Activated T-helper 2 cell treated with anti-CD3 and anti-CD28 coated beads, Interferon-gamma antibody, Interleukin-2, Interleukin-4, amounts not matched to agents 10 μg/mL and 5 μg/mL and 100 μg/mL, durations not matched to agents 14 hours and 24 hours and 36 hours (primary cell): ENCODE measurements at regions of chr2 and their contacts with region 1.

Region 1: DNA sequence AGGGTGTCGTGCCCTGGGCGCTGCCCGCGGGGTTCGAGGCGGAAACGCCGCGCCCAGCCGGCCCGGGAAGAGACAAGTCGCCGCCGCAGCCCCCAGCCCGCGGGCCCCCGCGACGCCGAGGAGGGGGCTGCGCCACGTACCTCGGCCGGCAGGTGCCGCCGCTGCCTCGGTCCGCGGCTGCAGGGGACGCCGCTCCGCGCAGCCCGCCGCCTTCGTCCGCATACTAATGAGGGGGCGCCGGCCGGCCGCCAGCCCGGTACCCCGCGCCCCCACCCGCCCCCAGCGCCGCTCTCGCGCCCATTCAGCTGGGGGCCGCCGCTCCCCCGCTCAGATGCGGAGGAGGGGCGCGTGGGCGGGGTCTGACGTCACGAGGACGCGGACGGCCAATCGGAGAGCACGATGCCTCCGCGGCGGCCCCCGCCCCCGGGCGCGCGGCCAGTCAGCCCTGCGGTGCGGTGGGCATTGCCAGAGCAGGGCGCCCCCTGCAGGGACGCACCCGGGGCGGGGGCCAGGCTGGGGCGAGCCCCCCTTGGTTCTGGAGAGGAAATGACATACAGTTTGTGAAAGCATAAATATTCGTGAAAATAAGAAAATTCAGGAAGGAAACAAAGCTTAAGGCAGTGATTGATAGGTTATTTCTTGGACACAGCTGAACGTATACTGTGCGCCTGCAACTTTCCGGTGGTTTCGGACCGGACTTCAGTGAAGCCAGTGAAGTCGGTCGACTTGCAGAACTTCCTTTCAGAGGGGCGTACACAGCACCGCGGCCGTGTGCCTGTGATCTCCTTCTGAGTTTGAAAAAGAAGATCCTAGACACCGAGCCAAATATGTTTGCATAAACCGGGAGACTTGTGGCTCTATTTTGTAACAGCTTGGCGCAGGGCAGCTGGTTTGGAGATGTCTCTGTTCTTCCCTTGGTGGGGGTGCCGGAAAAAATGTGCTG is at the start of gene ST3GAL5:
- DNase-seq: peak; percentile 89
- H3K4me3 Mint-ChIP-seq: peak within 1 kb of the TSS; percentile 82
- H3K27ac Mint-ChIP-seq: peak within 1 kb of the TSS; percentile 71
- H3K4me1 Mint-ChIP-seq: peaks cover 54% of the 10 kb centered on the region
- H3K27me3 Mint-ChIP-seq: peaks cover 4% of the 10 kb centered on the region
- total RNA-seq, gene ST3GAL5: 13.8 and 15.7 TPM in 2 replicates

Region 2: DNA sequence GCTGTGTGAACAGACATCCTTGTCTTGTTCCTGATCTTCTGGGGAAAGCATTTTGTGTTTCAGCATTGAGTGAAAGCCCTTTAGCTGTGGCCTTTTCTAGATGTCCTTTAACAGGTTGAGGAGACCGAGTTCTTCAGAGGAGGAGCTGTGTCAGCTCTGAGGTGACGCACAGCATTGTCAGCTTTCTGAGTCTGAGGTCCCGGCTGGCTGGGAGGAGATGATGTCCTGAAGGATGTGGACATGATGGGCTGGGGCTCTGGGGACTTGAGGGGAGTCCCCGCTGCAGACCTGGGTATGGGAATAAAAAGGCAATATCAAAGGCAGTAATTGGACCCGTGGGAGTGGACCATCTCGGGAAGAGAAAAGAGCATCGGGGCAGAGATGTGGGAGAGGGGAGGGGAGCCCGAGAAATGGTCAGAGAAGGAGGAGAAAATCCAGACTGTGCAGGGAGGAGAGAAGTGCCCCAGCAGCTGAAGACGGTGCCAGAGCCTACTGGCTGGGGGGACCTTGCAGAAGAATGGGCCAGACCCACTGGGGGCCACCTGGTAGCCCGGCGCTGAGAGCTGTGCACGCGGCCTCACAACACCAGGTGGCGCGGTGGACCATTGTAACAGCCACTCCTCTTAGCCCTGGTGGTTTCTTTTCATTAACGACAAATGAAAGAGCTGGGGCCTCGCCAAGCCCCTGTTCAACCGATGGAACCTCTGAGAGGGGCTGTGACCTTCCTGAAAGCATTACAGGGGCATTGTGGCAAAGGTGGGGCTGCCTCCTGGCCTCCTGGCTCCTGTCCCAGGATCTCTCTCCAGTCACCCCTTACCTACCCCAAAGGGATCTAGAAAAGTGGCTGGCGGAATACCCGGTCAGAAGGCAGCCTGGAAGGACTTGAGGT is 61.7 kb before region 1 on chr2:
- intact Hi-C with region 1: loop called (anchors 2 kb)
- DNase-seq: peak; percentile 75
- H3K4me3 Mint-ChIP-seq: no peak overlapping the region
- H3K27ac Mint-ChIP-seq: no peak overlapping the region
- H3K4me1 Mint-ChIP-seq: peaks cover 32% of the 10 kb centered on the region
- H3K27me3 Mint-ChIP-seq: peaks cover 29% of the 10 kb centered on the region

Region 3: DNA sequence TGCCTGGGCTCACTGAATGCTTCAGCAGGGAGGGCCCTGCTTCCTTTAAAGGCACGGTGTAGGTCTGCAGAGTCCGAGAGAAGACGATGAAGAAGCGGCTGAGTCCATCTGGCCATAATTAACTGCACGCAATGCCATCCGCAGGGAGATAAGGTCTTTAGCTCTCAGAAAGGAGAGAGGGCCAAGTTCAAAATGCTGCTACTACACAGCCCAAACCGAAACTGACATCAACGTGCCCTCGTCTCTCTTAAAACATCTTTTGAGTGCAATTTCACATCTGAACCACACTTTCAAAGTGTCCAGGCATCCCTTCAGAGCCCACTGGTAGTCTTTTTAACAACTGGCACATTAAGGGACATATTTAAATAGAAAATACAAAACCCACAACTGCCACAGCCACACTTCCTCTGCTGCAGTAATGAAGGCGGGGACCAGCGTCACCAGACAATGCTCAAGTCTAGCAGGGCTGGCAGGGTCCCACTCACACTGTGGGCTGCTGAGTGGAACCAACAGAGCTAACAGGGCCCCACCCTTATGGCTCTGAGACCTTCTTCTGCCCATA is 35.9 kb before region 1 on chr2:
- intact Hi-C with region 1: loop called (anchors 2 kb)
- DNase-seq: peak; percentile 54
- H3K4me3 Mint-ChIP-seq: peak overlapping the region; percentile 75
- H3K27ac Mint-ChIP-seq: peak overlapping the region; percentile 99
- H3K4me1 Mint-ChIP-seq: peaks cover 62% of the 10 kb centered on the region
- H3K27me3 Mint-ChIP-seq: no peaks in the 10 kb centered on the region

Region 4: DNA sequence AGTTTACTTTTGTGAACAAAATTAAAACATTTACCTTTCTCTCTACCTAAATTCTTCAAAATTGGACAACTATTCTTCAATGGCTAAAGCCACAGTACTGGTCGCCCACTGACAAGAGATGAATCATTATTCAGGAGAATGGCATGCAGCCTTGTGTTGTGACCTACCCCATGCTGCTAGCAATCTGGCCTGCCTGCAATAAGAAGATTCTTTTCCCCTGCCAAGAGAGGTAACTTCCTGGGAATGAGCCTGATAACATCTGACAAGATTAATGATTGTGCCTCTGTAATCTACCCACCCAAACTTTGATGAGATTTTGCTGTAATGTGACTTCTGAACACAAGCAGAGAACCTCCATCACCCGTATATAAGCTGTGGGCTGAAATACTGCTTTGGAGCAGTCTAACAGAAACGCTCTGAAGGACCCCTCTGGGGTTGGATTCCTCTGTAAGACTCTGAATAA is 46.8 kb after region 1 on chr2:
- intact Hi-C with region 1: loop called (anchors 5 kb)
- DNase-seq: no peak
- H3K4me3 Mint-ChIP-seq: no peak overlapping the region
- H3K27ac Mint-ChIP-seq: no peak overlapping the region
- H3K4me1 Mint-ChIP-seq: peaks cover 21% of the 10 kb centered on the region
- H3K27me3 Mint-ChIP-seq: peaks cover 9% of the 10 kb centered on the region

Region 5: DNA sequence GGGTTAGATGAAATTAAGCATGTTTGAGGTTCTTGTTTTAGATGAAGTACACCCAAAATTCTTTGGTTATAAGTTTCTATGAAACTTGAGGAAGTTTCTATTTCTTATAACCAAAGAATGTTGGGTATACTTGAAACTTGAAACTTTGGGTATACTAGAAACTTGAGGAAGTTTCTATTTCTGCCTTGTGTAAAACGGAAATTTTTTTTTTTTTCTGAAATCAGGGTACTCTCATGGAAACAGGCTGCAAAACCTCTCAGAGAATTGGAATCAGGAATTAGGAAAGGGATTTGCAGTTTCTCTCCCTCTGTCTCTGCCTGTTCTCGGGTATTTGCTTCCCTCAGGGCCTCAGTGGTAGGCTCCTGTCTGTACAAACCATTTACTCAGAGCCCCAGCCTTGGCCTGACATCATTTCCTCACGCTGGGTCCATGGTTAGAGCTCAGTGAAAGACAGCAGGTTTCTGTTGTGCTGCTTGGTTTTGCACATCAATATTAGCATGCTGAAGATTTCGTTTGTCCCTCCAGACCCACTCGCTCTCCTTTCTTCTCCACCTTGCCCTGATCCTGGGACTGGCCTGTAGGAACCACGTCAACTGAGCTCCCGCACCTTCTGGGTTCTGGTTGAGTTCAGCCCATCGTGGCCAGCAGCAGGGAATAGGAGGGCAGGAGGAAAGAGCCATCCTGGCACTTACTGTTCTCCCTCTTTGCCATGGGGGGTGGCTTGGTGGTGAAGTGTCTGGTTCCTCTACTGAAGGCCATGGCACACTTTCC is 110.3 kb after region 1 on chr2:
- intact Hi-C with region 1: loop called (anchors 2 kb)
- DNase-seq: peak; percentile 58
- H3K4me3 Mint-ChIP-seq: peak overlapping the region; percentile 20
- H3K27ac Mint-ChIP-seq: peak overlapping the region; percentile 77
- H3K4me1 Mint-ChIP-seq: peaks cover 68% of the 10 kb centered on the region
- H3K27me3 Mint-ChIP-seq: no peaks in the 10 kb centered on the region

Region 6: DNA sequence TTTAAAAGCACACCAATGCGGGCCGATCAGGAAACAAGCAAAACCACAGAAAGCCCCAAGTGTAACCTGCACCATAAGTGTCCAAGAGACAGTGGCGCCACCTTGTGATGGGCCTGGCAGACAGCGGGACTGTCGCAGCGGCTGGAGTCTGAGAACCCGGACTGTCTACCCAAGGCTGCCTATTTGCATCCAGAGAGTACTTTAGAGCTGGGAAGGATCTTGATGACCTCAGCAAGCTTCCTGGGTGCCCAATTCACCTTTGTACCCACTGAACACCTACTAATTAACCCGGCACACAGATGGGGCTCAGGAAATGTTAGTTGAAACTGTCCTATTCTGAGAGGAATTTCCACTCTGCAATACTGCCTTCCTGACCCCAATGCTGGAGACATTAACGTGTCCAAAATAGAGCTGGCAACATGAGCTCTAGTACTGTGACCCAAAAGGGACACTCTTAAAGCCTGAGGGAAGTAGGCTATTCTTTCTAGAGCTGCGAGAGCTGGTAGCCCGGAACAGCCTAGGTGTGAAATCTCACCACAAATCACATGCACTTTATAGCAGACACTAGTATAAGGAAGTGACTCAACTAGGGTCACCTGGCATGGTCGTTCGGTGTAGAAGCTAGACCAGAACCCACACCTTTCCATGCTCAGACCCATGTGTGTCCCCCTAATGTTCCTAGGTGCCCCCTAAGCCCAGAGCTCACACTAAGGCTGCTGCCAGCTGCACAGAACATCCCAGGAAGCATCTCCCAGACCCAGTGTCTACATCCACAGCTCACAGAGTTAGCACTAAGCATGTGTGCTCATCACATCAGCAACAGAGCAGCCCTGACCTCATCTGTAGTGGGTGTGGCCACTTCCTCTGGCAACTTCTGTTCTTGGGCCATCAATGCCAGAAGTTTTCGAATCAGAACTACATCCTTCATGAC is 191.3 kb after region 1 on chr2:
- intact Hi-C with region 1: loop called (anchors 5 kb)
- DNase-seq: peak; percentile 74
- H3K4me3 Mint-ChIP-seq: no peak overlapping the region
- H3K27ac Mint-ChIP-seq: no peak overlapping the region
- H3K4me1 Mint-ChIP-seq: peaks cover 40% of the 10 kb centered on the region
- H3K27me3 Mint-ChIP-seq: no peaks in the 10 kb centered on the region